Common myeloid progenitor, CD34-positive (primary cell): ENCODE measurements at regions of chr17 and their contacts with region 1.

Region 1: DNA sequence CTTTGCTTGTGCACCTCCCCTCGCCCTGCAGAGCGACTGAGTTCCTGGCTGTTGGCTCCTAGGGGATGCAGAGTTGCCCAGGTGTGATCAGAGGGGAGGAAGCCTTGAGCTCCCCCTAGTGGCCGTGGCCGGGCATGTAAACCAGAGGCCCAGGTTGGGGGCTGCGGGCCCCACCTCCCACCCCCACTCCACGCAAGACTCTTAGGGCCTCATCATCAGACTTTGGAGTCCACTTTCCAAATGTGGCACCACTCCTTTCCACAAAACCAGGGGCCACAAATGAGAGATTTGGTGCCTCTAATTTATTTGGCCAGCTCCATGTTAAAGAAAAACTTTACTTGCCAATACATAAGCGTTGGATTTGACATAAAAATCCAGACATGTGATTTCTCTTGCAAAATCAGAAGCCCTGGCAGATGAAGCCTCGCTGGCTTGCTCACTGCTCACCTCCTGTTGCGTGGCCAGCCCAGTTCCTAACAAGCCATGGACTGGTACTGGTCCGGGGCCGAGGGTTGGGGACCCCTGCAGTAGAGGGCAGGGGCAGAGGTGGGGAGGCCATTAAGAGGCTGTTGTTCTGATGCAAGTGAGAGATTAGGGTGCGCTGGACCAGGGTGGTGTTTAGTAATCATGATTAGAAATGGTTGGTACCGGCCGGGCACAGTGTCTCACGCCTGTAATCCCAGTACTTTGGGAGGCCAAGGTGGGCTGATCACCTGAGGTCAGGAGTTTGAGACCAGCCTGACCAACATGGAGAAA is 28.7 kb upstream of the GAS7 start:
- DNase-seq: peak; percentile 54 to 61 (median 57)
- H3K4me3 ChIP-seq: no peak overlapping the region
- H3K27ac ChIP-seq: no peak overlapping the region
- H3K4me1 ChIP-seq: peaks cover 0 to 3% (median 0%) of the 10 kb centered on the region in 4 experiments
- H3K27me3 ChIP-seq: no peaks in the 10 kb centered on the region

Region 2: GRCh38 chr17:9968902-9969617 is 258.0 kb before region 1 on chr17:
- CTCF ChIA-PET with region 1: interaction called, 50 read pairs
- POLR2A ChIA-PET with region 1: no interaction called
- DNase-seq: no peak
- H3K4me3 ChIP-seq: no peak overlapping the region
- H3K27ac ChIP-seq: no peak overlapping the region
- H3K4me1 ChIP-seq: peaks cover 8 to 20% (median 11%) of the 10 kb centered on the region in 4 experiments
- H3K27me3 ChIP-seq: no peaks in the 10 kb centered on the region

Region 3: GRCh38 chr17:10119203-10120108 is 107.7 kb before region 1 on chr17:
- CTCF ChIA-PET with region 1: interaction called, 20 read pairs
- POLR2A ChIA-PET with region 1: no interaction called
- DNase-seq: peak; percentile 39 to 74 (median 66)
- H3K4me3 ChIP-seq: peak overlapping the region in 2 of 7 experiments; percentile 35 to 42
- H3K27ac ChIP-seq: no peak overlapping the region
- H3K4me1 ChIP-seq: peaks cover 14 to 91% (median 86%) of the 10 kb centered on the region in 4 experiments
- H3K27me3 ChIP-seq: no peaks in the 10 kb centered on the region

Region 4: DNA sequence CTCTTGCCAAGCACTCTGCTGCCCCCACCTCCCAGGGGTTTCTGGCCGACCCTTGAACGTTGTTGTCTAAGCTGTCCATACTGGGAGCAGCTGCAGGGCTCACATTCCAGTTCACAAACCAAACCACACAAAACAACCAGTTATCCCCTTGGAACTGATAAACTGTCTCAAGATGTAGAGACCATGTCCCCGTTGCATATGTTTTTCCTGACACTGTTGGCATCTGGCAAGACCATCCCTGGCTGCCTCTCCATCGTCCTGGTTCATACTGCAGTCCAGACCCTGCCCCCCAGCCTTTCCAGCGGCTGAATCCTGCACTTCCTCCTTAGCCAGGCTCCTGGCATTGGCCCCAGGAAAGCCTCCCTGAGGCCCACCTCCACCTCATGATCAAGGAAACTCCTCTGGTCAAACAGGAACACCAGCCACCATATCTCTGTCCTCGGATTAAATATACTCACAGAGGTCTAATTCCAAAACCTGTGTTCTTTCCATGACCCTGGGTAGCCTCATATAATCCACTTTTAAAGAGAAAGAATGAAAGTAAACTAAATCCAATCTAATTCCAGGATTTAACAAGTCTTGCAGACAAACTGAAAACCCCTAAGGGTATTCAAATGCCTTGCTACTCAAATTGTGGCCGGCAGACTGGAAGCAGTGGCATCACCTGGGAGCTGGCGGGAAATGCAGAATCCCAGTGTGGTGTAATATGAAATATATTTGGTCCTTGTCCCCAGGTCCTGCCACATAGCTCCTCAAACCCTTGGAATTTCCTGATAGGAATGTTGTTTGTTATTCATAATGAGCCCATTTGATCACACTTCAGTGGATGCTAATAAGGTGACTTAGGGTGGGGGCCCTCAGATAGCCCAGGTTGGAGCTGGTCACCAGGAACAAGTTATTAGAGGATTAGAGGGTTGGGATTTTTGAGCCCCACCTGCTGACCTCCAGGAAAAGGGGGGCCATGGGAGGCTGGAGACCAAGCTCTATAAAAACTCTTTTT is 42.9 kb before region 1 on chr17:
- CTCF ChIA-PET with region 1: no interaction called
- POLR2A ChIA-PET with region 1: no interaction called
- DNase-seq: no peak
- H3K4me3 ChIP-seq: no peak overlapping the region
- H3K27ac ChIP-seq: no peak overlapping the region
- H3K4me1 ChIP-seq: peaks cover 0 to 3% (median 0%) of the 10 kb centered on the region in 4 experiments
- H3K27me3 ChIP-seq: no peaks in the 10 kb centered on the region

Region 5: GRCh38 chr17:10215997-10216938 is 10.8 kb before region 1 on chr17:
- CTCF ChIA-PET with region 1: interaction called, 11 read pairs
- POLR2A ChIA-PET with region 1: no interaction called
- DNase-seq: no peak
- H3K4me3 ChIP-seq: no peak overlapping the region
- H3K27ac ChIP-seq: no peak overlapping the region
- H3K4me1 ChIP-seq: no peaks in the 10 kb centered on the region
- H3K27me3 ChIP-seq: no peaks in the 10 kb centered on the region

Region 6: GRCh38 chr17:10305398-10305797 is 78.3 kb after region 1 on chr17:
- CTCF ChIA-PET with region 1: no interaction called
- POLR2A ChIA-PET with region 1: no interaction called
- DNase-seq: no peak
- H3K4me3 ChIP-seq: no peak overlapping the region
- H3K27ac ChIP-seq: no peak overlapping the region
- H3K4me1 ChIP-seq: no peaks in the 10 kb centered on the region
- H3K27me3 ChIP-seq: peaks cover 0 to 3% (median 0%) of the 10 kb centered on the region in 5 experiments